ENCODE measurements at regions of chr2 and their contacts with region 1.

Region 1: DNA sequence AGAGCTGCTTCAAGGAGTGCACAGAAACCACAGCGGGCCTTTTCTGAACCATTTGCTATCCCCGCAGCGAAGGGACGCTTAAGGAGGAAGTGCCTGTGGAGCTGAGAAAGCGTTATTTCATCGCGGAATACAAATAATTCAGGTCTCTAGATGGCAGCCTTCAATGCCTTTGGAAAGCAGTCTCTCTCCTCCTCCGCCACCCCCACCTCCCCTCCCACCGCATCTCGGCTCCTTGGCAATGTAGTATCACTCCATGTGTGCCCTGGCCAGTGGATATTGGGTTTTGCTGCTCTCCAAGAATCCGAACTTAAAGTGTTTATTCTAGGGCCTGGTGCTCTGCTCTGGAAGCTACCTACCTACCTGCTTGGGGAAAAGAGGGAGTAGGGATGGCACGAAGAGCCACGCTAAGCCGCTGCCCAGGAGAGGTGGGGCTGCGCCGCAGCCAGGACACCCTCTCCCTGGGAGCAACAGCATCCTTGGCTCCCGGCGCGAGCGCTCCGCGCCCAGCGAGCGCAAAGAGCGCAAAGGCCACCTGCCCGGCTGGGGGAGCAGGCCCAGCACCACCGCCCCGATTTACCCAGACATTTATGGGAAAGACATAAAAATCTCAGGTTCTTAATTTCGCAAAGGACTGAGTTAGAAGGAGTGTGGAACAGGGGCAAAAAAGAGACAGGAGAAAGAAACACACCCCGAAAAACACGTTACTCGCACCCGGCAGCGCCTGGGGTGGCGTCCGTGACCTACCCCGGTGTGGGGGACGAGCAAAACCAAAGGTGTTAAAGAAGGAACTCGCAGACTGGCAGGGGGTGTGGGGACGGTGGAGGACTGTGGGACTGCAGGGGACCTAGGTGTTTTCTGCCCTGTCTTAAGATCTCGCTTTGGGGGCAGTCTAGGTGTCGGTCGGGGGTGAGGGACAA is 1.0 kb downstream of the SPHKAP start:
- DNase-seq: peak; percentile 63
- ATAC-seq: peak; percentile 65

Region 2: DNA sequence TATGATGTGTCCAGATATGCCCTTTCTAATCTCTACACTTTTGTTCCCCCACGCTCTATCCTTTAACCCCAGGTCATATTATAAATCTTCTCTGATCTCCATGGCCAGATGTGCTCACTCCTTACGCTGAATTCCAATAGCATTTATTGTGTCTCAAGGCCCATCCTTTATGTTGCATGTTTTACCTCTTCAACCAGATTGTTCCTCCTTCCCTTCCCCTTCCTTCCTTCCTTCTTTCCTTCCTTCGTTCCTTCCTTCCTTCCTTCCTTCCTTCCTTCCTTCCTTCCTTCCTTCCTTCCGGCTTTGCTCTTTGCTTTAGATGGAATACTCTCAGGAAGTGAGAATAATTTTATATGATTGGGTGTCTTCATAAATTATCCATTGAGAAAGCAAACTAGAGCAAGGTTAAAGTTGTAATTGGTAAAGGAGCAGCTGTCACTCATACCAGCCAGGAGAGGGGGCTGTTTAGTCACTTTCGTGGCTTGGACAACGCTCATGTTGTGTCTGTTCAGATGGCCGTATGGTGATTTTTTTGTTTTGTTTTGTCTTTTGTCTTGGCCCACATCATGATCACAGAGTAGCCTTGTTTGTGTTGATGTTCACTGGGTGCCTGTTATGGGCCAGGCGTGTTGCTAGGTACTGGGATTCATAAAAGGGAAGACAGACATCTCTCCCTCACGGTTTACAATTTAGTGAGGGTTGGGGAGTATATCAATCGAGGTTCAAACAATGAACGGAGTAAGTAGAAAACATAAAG is 241.0 kb before region 1 on chr2:
- intact Hi-C with region 1: loop called (anchors 5 kb)
- DNase-seq: no peak
- ATAC-seq: peak; percentile 67

Region 3: GRCh38 chr2:228048838-228049490 is 131.5 kb before region 1 on chr2:
- intact Hi-C with region 1: loop called (anchors 5 kb)
- DNase-seq: no peak
- ATAC-seq: peak; percentile 82

Region 4: DNA sequence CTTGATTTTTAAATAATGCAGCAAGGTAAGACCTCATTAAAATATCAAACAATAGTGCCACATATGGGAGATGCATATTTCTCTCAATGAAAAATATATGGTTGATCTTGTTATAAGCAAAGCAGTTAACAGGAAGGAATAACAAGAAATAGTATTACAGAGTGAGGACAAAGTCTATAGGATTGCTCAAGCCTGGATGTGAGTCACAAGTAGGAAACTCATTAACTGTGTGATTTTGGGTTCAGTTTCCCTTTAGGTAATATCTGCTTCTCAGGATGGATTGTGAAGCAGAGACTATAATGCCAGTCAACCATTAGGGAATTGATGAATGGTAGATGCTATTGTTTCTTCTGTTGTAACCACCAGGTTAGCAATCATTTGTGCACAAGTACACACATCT is 44.0 kb after region 1 on chr2:
- intact Hi-C with region 1: no loop called
- DNase-seq: no peak
- ATAC-seq: no peak

Region 5: GRCh38 chr2:228318218-228318617 is 137.8 kb after region 1 on chr2:
- intact Hi-C with region 1: loop called (anchors 5 kb)
- DNase-seq: no peak
- ATAC-seq: peak; percentile 69

Region 6: GRCh38 chr2:228348516-228349064 is 168.2 kb after region 1 on chr2:
- intact Hi-C with region 1: loop called (anchors 10 kb)
- DNase-seq: no peak
- ATAC-seq: peak; percentile 87

Region 7: DNA sequence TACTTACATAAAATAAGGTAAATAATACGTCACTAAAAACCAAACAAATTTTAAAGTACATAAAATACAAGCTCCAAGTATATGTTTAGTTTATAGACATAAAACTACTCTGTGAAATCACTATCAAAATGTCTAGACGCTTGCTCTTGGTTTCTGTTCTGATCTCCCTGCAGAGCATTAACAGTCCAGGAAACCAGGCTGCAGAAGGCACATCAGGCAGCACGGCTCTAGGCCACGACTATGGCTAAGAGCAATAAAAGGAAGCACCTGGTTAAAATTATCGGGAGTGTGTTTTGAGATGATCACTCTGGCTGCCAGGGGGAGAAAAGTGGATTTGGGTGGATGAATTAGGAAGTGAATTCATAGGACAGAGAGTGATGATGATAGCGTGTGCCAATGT is 197.1 kb after region 1 on chr2:
- intact Hi-C with region 1: loop called (anchors 1 kb)
- DNase-seq: no peak
- ATAC-seq: no peak

Region 8: GRCh38 chr2:228652366-228652765 is 471.9 kb after region 1 on chr2:
- intact Hi-C with region 1: loop called (anchors 1 kb)
- DNase-seq: no peak
- ATAC-seq: no peak